ENCODE measurements at regions of chr17 and their contacts with region 1.

Region 1: DNA sequence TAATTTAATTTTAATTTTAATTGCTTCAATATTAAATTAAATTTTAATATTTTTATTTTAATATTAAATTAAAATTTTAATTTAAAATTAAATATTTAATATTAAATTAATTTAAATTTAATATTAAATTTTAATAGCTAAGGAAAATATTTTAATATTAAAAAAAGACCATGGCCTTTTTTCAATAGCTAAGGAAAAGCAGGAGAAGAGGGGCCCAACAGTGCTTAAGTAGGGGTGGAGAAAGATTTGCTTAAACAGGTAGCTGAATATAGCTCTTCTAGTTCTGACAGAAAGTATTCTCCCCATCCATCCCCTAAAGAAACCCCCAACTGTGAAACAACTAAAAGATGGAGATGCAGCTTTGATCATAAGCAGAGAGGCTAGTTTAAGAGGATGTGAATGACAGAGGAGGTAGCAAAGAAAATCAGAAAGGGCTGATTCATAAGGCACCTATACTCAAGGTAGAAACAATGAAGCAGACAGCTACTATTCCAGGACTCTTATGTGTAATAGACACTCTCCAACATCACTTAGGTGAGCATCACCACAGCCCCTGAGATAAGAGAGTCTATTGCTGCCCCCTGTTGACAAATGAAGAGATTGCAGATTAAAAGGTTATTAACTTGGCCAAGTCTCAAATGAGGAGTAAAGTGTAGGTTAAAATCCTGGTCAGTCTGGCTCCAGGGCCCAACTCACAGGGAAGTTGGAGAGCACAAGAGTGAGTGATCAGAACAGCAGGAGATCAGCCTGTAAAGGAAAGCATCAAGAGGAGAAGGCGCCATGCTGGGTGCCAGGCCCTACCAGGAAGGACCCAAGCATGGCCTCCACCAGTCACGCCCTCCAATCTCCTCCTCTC is 7.8 kb upstream of the RNASEK start:
- DNase-seq: peak; percentile 66 to 77 (median 77)
- H3K4me3 ChIP-seq: no peak overlapping the region
- H3K4me3 Mint-ChIP-seq: peak overlapping the region in 1 of 8 donors; percentile 5
- H3K27ac ChIP-seq: no peak overlapping the region
- H3K27ac Mint-ChIP-seq: peak overlapping the region; percentile 7 to 89 (median 81)
- H3K4me1 ChIP-seq: peaks cover 19% of the 10 kb centered on the region
- H3K4me1 Mint-ChIP-seq: peaks cover 16 to 33% (median 28%) of the 10 kb centered on the region in 4 donors
- H3K27me3 ChIP-seq: no peaks in the 10 kb centered on the region
- H3K27me3 Mint-ChIP-seq: no peaks in the 10 kb centered on the region

Region 2: DNA sequence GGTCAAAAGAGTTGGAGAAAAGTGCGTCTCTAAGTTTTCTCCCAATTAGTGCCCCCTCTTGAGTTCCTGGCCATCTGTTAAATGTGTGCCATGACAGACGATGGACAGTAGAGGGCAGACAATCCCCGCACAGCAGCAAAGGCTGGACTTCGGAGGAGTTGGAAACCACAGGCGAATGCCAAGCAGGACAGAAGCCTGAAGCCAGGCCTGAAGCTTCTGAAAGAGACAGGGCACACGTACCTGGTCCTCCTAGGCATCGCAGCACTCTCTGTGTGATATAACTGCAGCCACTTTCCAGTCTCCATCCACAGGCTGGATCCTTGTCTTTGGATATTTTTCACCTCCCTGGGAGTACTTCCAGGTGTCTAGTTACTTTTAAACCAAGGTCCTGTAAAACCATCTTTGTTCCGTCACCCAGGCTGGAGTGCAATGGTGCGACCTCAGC is 338.5 kb before region 1 on chr17:
- CTCF ChIA-PET with region 1: interaction called, 3 read pairs
- POLR2A ChIA-PET with region 1: no interaction called
- intact Hi-C with region 1: loop called (anchors 1 kb)
- DNase-seq: peak in 3 of 5 donors; percentile 19 to 32 (median 25)
- H3K4me3 ChIP-seq: no peak overlapping the region
- H3K4me3 Mint-ChIP-seq: no peak overlapping the region
- H3K27ac ChIP-seq: no peak overlapping the region
- H3K27ac Mint-ChIP-seq: no peak overlapping the region
- H3K4me1 ChIP-seq: peaks cover 4% of the 10 kb centered on the region
- H3K4me1 Mint-ChIP-seq: peaks cover 2 to 9% (median 4%) of the 10 kb centered on the region in 4 donors
- H3K27me3 ChIP-seq: no peaks in the 10 kb centered on the region
- H3K27me3 Mint-ChIP-seq: no peaks in the 10 kb centered on the region

Region 3: DNA sequence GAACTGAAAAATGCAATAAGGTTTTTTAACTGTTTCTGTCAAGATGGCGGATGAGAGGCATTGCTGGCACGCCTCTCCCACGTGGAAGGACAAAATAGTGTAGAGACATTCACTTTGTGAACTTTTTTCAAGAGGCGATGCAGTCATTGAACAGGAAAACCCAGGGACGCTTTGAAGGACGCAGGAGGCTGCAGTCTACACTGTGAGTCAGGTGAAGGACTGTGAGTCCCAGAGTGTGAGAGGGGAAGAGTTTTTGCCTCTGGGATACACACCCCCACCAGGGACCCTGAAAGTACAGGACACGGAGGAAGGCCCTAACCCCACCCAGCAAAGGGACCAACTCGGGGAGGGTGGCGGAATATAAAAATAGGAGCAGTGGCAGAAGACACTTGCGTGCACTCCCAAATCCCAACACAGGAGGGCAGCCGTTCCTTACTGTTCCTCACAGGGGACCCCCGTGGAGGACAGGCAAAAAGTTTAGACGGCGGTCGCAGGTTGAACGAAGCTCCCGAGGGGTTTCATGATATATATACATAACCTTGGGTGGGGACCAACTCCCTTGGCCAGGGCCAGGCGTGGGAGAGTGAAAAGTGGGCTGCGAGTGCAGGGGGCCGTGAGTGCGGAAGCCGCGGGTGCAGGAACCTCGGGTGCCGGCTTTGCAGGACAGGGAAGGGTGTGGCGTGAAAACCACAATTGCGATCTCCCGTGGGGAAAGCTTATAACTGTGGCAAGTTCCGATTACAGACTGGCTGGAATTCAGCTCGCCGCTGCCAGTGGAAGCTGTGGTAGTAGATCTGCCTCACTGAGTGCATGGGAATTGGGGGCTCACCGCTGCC is 90.8 kb before region 1 on chr17:
- CTCF ChIA-PET with region 1: interaction called, 118 read pairs
- POLR2A ChIA-PET with region 1: interaction called, 3 read pairs
- intact Hi-C with region 1: loop called (anchors 1 kb)
- DNase-seq: peak; percentile 58 to 68 (median 65)
- H3K4me3 ChIP-seq: peak overlapping the region in 1 of 2 donors; percentile 27
- H3K4me3 Mint-ChIP-seq: peak overlapping the region; percentile 66 to 89 (median 85)
- H3K27ac ChIP-seq: no peak overlapping the region
- H3K27ac Mint-ChIP-seq: peak overlapping the region in 3 of 7 donors; percentile 14 to 82 (median 79)
- H3K4me1 ChIP-seq: peaks cover 7% of the 10 kb centered on the region
- H3K4me1 Mint-ChIP-seq: peaks cover 8 to 24% (median 17%) of the 10 kb centered on the region in 4 donors
- H3K27me3 ChIP-seq: no peaks in the 10 kb centered on the region
- H3K27me3 Mint-ChIP-seq: peaks cover 13 to 22% of the 10 kb centered on the region in 2 donors

Region 4: DNA sequence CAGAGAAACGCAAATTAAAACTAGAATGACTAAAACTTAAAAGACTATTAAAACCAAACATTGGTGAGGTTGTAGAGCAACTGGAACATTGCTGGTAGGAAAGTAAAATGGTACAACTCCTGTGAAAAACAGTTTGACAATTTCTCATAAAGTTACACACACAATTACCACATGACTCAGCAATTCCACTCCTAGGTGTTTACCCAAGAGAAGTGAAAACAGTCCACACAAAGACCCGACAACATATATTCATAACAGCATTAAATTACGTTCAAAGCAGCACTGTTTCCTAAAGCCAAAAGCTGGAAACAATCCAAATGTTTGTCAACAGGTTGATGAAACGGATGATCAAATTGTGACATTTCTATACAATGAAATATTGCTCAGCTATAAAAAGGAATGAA is 35.3 kb before region 1 on chr17:
- CTCF ChIA-PET with region 1: interaction called, 10 read pairs
- POLR2A ChIA-PET with region 1: interaction called, 3 read pairs
- intact Hi-C with region 1: no loop called
- DNase-seq: no peak
- H3K4me3 ChIP-seq: no peak overlapping the region
- H3K4me3 Mint-ChIP-seq: no peak overlapping the region
- H3K27ac ChIP-seq: no peak overlapping the region
- H3K27ac Mint-ChIP-seq: no peak overlapping the region
- H3K4me1 ChIP-seq: no peaks in the 10 kb centered on the region
- H3K4me1 Mint-ChIP-seq: no peaks in the 10 kb centered on the region
- H3K27me3 ChIP-seq: no peaks in the 10 kb centered on the region
- H3K27me3 Mint-ChIP-seq: no peaks in the 10 kb centered on the region

Region 5: DNA sequence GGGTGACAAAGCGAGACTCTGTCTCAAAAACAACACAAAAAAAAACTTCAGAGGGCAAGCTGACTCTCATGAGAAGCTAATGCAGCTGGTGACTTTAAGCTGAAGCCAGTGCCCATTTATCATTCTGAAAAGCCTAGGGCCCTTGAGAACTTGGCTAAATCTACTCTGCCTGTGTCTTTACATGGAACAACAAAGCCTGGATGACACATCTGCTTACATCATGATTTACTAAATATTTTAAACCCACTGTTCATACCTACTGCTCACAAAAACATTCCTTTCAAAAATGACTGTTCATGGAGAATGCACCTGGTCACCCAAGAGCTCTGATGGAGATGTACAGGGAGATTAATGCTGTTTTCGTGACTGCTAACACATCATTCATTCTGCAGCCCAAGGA is 14.8 kb before region 1 on chr17:
- CTCF ChIA-PET with region 1: interaction called, 11 read pairs
- POLR2A ChIA-PET with region 1: interaction called, 3 read pairs
- intact Hi-C with region 1: no loop called
- DNase-seq: no peak
- H3K4me3 ChIP-seq: no peak overlapping the region
- H3K4me3 Mint-ChIP-seq: no peak overlapping the region
- H3K27ac ChIP-seq: no peak overlapping the region
- H3K27ac Mint-ChIP-seq: no peak overlapping the region
- H3K4me1 ChIP-seq: no peaks in the 10 kb centered on the region
- H3K4me1 Mint-ChIP-seq: peaks cover 0 to 2% (median under 1%) of the 10 kb centered on the region in 4 donors
- H3K27me3 ChIP-seq: no peaks in the 10 kb centered on the region
- H3K27me3 Mint-ChIP-seq: no peaks in the 10 kb centered on the region

Region 6: DNA sequence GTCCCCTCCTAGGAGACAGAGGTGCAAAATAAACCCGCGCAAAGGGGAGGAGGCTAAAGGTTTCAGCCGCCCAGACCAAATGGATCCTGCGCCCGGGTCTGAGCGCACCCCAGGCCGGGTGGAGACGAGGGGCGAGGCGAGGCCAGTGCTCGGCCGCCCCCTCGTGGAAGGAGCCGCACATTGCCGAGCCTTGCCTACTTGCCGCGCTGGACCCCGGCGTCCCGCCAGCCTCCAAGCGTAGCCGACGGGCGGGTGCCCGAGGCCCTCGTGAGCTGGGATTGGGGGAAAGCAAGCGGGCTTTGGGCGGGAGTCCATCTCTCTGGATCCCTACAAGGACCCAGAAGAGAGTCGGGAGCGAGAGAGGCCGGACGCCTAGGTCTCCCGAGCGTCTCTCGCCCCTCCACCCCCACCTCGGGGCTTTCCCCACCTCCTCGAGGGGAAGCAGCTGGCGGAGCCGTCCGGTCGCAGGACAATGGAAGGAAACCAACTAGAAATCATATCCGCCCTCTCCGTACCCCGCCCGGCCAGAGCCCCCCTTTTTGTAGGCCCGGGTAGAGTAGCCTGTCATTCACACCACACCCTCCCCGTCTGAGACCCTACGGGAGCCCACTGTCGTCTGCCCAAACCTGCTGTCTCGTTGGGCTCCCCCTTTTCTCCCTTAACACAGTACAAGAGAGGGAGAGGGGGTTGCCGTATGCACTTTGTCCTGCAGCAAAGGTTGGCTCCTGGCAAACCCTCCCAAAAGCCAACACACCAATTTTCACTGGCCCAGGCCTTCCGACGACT is 17.6 kb after region 1 on chr17:
- CTCF ChIA-PET with region 1: interaction called, 44 read pairs
- POLR2A ChIA-PET with region 1: interaction called, 4 read pairs
- intact Hi-C with region 1: no loop called
- DNase-seq: peak; percentile 73 to 79 (median 74)
- H3K4me3 ChIP-seq: peak overlapping the region; percentile 6 to 37
- H3K4me3 Mint-ChIP-seq: peak overlapping the region; percentile 63 to 88 (median 76)
- H3K27ac ChIP-seq: no peak overlapping the region
- H3K27ac Mint-ChIP-seq: peak overlapping the region; percentile 81 to 97 (median 91)
- H3K4me1 ChIP-seq: peaks cover 42% of the 10 kb centered on the region
- H3K4me1 Mint-ChIP-seq: peaks cover 21 to 60% (median 38%) of the 10 kb centered on the region in 4 donors
- H3K27me3 ChIP-seq: no peaks in the 10 kb centered on the region
- H3K27me3 Mint-ChIP-seq: peaks cover 0 to 3% of the 10 kb centered on the region in 2 donors